ENCODE measurements at regions of chr1 and their contacts with region 1.

Region 1: GRCh38 chr1:27489910-27490741 is at the start of gene WASF2:
- DNase-seq: peak; percentile 95
- H3K4me3 ChIP-seq: peak within 1 kb of the TSS; percentile 63 to 94 (median 94)
- H3K27ac ChIP-seq: peak within 1 kb of the TSS; percentile 97
- H3K4me1 ChIP-seq: peaks cover 18% of the 10 kb centered on the region
- H3K27me3 ChIP-seq: no peaks in the 10 kb centered on the region
- CTCF ChIP-seq: no peak
- total RNA-seq, gene WASF2: 32.2 to 138 TPM

Region 2: GRCh38 chr1:27341525-27342252 is 148.4 kb before region 1 on chr1 and contains the start of gene SYTL1:
- CTCF ChIA-PET with region 1: no interaction called
- dilution Hi-C with region 1: no loop called
- in situ Hi-C with region 1: no loop called
- intact Hi-C with region 1: loop called (anchors 1 kb)
- DNase-seq: peak; percentile 86
- H3K4me3 ChIP-seq: peak within 1 kb of the TSS; percentile 79 to 90 (median 83)
- H3K27ac ChIP-seq: peak within 1 kb of the TSS; percentile 86
- H3K4me1 ChIP-seq: peaks cover 32% of the 10 kb centered on the region
- H3K27me3 ChIP-seq: no peaks in the 10 kb centered on the region
- CTCF ChIP-seq: no peak
- total RNA-seq, gene SYTL1: 63.3 to 91.8 TPM

Region 3: DNA sequence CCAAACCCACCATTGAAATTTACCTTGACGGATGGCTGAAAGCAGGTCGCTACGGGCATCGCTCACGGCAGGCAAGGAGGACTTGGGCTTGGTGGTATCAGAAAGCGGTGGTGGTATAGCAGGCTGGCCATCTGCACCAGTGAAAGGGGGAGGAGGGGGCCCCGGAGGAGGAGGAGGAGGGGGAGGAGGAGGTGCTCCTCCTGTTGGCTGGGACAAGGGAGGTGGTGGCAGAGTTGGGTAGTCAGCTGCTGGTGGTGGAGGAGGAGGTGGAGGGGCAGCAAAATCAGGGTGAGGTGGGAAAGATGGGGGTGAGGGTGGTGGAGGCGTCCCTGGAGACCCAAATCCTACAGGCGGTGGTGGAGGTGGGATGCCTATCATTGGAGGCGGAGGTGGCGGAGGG is 80.5 kb before region 1 on chr1:
- CTCF ChIA-PET with region 1: no interaction called
- dilution Hi-C with region 1: no loop called
- in situ Hi-C with region 1: no loop called
- intact Hi-C with region 1: no loop called
- DNase-seq: no peak
- H3K4me3 ChIP-seq: no peak overlapping the region
- H3K27ac ChIP-seq: no peak overlapping the region
- H3K4me1 ChIP-seq: peaks cover 27% of the 10 kb centered on the region
- H3K27me3 ChIP-seq: no peaks in the 10 kb centered on the region
- CTCF ChIP-seq: no peak

Region 4: DNA sequence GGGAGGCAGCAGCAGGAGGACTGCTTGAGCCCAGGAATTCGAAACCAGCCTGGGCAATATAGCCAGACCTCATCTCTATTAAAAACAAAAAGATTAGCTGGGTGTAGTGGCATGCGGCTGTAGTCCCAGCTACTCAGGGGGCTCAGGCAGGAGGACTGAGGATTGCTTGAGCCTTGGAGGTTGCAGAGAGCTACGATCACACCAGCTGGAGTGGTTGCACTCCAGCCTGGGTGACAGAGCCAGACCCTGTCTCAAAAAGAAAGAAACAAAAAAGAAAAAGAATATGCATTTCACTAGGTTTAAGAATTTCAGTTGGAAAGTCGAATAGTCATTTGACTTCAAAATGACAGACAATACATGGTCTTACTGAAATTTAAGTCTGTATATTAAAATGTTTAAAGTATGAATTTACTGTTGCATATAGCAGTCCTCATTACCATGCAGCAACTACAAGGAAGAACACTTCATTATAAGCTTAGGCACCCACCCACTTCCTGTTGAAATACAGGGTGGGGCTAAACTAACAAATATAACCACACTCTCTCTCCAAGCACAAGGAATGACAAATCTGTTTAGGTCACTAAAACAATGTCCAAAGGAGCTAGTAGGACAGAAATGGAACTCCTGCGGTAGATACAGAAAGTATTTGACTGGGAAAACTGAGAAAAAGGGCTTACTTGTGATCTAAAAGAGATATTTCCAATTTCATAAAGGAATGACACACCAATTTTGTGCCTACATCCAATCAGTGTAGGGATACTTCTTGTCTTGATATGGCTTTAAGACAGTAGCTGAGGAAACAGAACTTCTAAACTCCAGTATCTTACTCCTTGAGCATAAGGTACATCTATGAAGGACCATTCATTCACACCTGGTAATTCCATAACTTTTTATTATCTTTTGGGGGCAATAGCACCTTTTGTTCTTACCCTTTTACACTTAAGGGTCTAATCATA is 53.6 kb before region 1 on chr1:
- CTCF ChIA-PET with region 1: no interaction called
- dilution Hi-C with region 1: no loop called
- in situ Hi-C with region 1: no loop called
- intact Hi-C with region 1: loop called (anchors 5 kb)
- DNase-seq: peak; percentile 66
- H3K4me3 ChIP-seq: no peak overlapping the region
- H3K27ac ChIP-seq: peak overlapping the region; percentile 35
- H3K4me1 ChIP-seq: peaks cover 19% of the 10 kb centered on the region
- H3K27me3 ChIP-seq: no peaks in the 10 kb centered on the region
- CTCF ChIP-seq: no peak

Region 5: GRCh38 chr1:27448982-27449381 is 41.1 kb before region 1 on chr1:
- CTCF ChIA-PET with region 1: no interaction called
- dilution Hi-C with region 1: no loop called
- in situ Hi-C with region 1: no loop called
- intact Hi-C with region 1: no loop called
- DNase-seq: no peak
- H3K4me3 ChIP-seq: no peak overlapping the region
- H3K27ac ChIP-seq: no peak overlapping the region
- H3K4me1 ChIP-seq: no peaks in the 10 kb centered on the region
- H3K27me3 ChIP-seq: no peaks in the 10 kb centered on the region
- CTCF ChIP-seq: no peak

Region 6: DNA sequence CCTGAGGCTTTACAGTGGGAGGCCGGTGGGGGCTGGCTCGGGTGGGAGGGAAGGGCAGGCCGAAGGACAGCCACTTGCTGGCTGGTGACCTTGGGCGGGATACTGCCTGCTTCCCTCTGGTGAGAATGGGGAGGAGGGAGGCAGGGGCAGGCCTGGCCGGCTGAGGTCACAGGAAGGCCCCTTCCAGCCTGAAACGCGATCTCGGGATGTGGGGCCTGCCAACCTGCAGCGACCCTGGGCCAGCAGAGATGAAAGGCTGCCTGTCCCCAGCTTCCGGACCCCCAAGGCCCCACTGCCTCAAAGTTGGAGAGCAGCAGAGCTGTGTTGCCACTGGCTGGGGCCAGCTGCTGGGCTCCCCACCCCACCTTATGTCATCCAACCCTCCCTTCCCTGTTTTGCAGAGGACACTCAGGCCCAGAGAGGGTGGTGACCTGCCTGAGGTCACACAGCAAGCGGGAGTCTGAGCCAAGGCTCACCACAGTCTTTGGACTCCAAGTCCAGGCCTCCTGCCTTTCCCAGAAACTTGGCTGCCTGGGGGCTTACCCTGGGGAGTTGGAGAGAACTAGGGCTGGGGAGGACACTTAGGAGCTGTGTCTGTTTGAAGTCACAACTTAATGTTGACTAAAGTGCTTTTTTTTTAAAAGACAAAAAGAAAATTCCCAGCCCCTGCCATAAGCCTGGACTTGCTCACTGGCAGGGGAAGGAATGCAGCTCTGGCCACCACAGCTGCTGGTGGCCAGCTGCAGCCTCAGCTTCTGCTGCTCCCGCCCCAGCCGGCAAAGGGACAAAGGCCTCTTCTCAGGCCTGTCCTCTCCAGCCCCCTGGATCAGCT is 14.7 kb after region 1 on chr1:
- CTCF ChIA-PET with region 1: interaction called, 14 read pairs
- dilution Hi-C with region 1: no loop called
- in situ Hi-C with region 1: no loop called
- intact Hi-C with region 1: no loop called
- DNase-seq: peak; percentile 76
- H3K4me3 ChIP-seq: no peak overlapping the region
- H3K27ac ChIP-seq: peak overlapping the region; percentile 81
- H3K4me1 ChIP-seq: peaks cover 28% of the 10 kb centered on the region
- H3K27me3 ChIP-seq: no peaks in the 10 kb centered on the region
- CTCF ChIP-seq: no peak

Region 7: GRCh38 chr1:27522432-27523351 is 32.6 kb after region 1 on chr1:
- CTCF ChIA-PET with region 1: interaction called, 4 read pairs
- dilution Hi-C with region 1: no loop called
- in situ Hi-C with region 1: no loop called
- intact Hi-C with region 1: loop called (anchors 2 kb)
- DNase-seq: peak; percentile 99
- H3K4me3 ChIP-seq: peak overlapping the region in 1 of 3 experiments; percentile 7
- H3K27ac ChIP-seq: peak overlapping the region; percentile 83
- H3K4me1 ChIP-seq: peaks cover 91% of the 10 kb centered on the region
- H3K27me3 ChIP-seq: no peaks in the 10 kb centered on the region
- CTCF ChIP-seq: peak; percentile 29 to 42

Region 8: GRCh38 chr1:27542408-27543273 is 52.5 kb after region 1 on chr1:
- CTCF ChIA-PET with region 1: no interaction called
- dilution Hi-C with region 1: loop called (anchors 5 kb)
- in situ Hi-C with region 1: no loop called
- intact Hi-C with region 1: no loop called
- DNase-seq: peak; percentile 99
- H3K4me3 ChIP-seq: no peak overlapping the region
- H3K27ac ChIP-seq: peak overlapping the region; percentile 80
- H3K4me1 ChIP-seq: peaks cover 81% of the 10 kb centered on the region
- H3K27me3 ChIP-seq: no peaks in the 10 kb centered on the region
- CTCF ChIP-seq: no peak